ENCODE measurements at regions of chr1 and their contacts with region 1.

Region 1: GRCh38 chr1:156054500-156055280 is at the start of gene LAMTOR2:
- DNase-seq: peak; percentile 99
- ATAC-seq: peak; percentile 81
- H3K4me3 ChIP-seq: peak within 1 kb of the TSS; percentile 85
- H3K27ac ChIP-seq: peak within 1 kb of the TSS; percentile 89
- H3K4me1 ChIP-seq: peaks cover 15% of the 10 kb centered on the region
- H3K27me3 ChIP-seq: no peaks in the 10 kb centered on the region
- CTCF ChIP-seq: no peak
- total RNA-seq, gene LAMTOR2: 130 TPM in 2 replicates

Region 2: GRCh38 chr1:155540000-155540874 is 514.5 kb before region 1 on chr1:
- CTCF ChIA-PET with region 1: no interaction called
- POLR2A ChIA-PET with region 1: no interaction called
- intact Hi-C with region 1: no loop called
- DNase-seq: no peak
- ATAC-seq: no peak
- H3K4me3 ChIP-seq: no peak overlapping the region
- H3K27ac ChIP-seq: no peak overlapping the region
- H3K4me1 ChIP-seq: no peaks in the 10 kb centered on the region
- H3K27me3 ChIP-seq: no peaks in the 10 kb centered on the region
- CTCF ChIP-seq: no peak

Region 3: DNA sequence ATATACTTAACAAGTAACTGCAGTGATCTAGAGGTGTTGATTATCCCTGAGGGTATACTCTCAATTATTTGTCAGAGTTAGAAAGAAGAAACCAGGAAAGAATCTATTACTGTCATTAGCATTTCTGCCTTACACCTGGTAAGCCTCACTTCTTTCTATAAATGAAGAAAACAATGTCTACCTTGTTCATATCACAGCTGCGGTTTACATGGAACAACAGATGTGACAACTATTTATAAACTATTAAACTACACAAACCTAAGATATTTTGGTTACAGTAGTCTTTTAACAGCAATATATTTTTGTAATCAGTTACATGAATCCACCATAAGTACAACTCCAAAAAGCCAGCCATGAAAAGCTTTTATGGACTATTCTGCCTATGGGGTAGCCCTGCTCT is 238.3 kb before region 1 on chr1:
- CTCF ChIA-PET with region 1: no interaction called
- POLR2A ChIA-PET with region 1: no interaction called
- intact Hi-C with region 1: no loop called
- DNase-seq: no peak
- ATAC-seq: no peak
- H3K4me3 ChIP-seq: no peak overlapping the region
- H3K27ac ChIP-seq: no peak overlapping the region
- H3K4me1 ChIP-seq: no peaks in the 10 kb centered on the region
- H3K27me3 ChIP-seq: no peaks in the 10 kb centered on the region
- CTCF ChIP-seq: no peak

Region 4: DNA sequence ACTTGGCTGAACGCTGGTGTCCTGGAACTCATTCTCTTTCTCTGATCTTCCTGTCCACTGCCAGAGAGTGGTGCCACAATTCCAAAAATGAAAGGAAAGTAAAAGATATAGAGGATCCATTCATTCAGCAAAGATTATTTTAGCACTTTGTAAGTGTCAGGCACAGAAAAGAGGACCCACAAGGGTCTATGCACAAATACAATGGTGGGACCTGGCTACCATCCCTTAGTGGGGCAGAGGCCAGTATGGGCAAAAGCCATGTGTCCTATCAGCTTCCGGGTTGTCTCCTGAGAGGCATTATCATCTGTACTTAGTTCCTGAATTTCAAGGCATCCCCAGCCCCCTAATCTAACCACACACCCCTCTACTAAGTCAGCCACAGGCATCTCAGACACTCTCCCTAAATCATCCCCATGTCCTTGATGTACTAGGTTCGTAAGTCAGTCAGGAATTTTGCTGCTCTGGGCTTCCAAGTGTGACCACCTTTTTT is 53.0 kb before region 1 on chr1:
- CTCF ChIA-PET with region 1: no interaction called
- POLR2A ChIA-PET with region 1: no interaction called
- intact Hi-C with region 1: no loop called
- DNase-seq: no peak
- ATAC-seq: no peak
- H3K4me3 ChIP-seq: no peak overlapping the region
- H3K27ac ChIP-seq: no peak overlapping the region
- H3K4me1 ChIP-seq: peaks cover 11% of the 10 kb centered on the region
- H3K27me3 ChIP-seq: no peaks in the 10 kb centered on the region
- CTCF ChIP-seq: no peak

Region 5: GRCh38 chr1:156020292-156021089 is 34.2 kb before region 1 on chr1 and contains the start of gene SSR2:
- CTCF ChIA-PET with region 1: no interaction called
- POLR2A ChIA-PET with region 1: no interaction called
- intact Hi-C with region 1: loop called (anchors 1 kb)
- DNase-seq: peak; percentile 98
- ATAC-seq: peak; percentile 98
- H3K4me3 ChIP-seq: peak within 1 kb of the TSS; percentile 75
- H3K27ac ChIP-seq: no peak within 1 kb of the TSS
- H3K4me1 ChIP-seq: peaks cover 6% of the 10 kb centered on the region; the same call in 1 of the 2 replicates
- H3K27me3 ChIP-seq: no peaks in the 10 kb centered on the region
- CTCF ChIP-seq: no peak
- total RNA-seq, gene SSR2: 282 and 293 TPM in 2 replicates

Region 6: GRCh38 chr1:156082309-156083091 is 27.8 kb after region 1 on chr1 and contains the start of gene MEX3A:
- CTCF ChIA-PET with region 1: no interaction called
- POLR2A ChIA-PET with region 1: no interaction called
- intact Hi-C with region 1: loop called (anchors 1 kb)
- DNase-seq: peak; percentile 77
- ATAC-seq: peak; percentile 72
- H3K4me3 ChIP-seq: peak within 1 kb of the TSS; percentile 78
- H3K27ac ChIP-seq: no peak within 1 kb of the TSS
- H3K4me1 ChIP-seq: peaks cover 12% of the 10 kb centered on the region
- H3K27me3 ChIP-seq: no peaks in the 10 kb centered on the region
- CTCF ChIP-seq: no peak
- total RNA-seq, gene MEX3A: 12.9 and 14.7 TPM in 2 replicates